Endothelial cell of umbilical vein (primary cell): ENCODE measurements at regions of chr12 and their contacts with region 1.

Region 1: GRCh38 chr12:89345830-89346740 is 6.2 kb downstream of the DUSP6 start:
- DNase-seq: peak; percentile 99
- H3K4me3 ChIP-seq: peak overlapping the region in 1 of 3 experiments; percentile 90
- H3K27ac ChIP-seq: peak overlapping the region; percentile 60
- H3K4me1 ChIP-seq: peaks cover 48% of the 10 kb centered on the region
- H3K27me3 ChIP-seq: no peaks in the 10 kb centered on the region
- CTCF ChIP-seq: no peak
- POLR2A ChIP-seq: no peak

Region 2: GRCh38 chr12:89051065-89051677 is 294.9 kb before region 1 on chr12:
- CTCF ChIA-PET with region 1: interaction called, 13 read pairs
- POLR2A ChIA-PET with region 1: no interaction called
- dilution Hi-C with region 1: no loop called
- intact Hi-C with region 1: loop called (anchors 1 kb)
- DNase-seq: peak; percentile 88
- H3K4me3 ChIP-seq: no peak overlapping the region
- H3K27ac ChIP-seq: no peak overlapping the region
- H3K4me1 ChIP-seq: no peaks in the 10 kb centered on the region
- H3K27me3 ChIP-seq: no peaks in the 10 kb centered on the region
- CTCF ChIP-seq: peak; percentile 62
- POLR2A ChIP-seq: no peak

Region 3: GRCh38 chr12:89084751-89085150 is 261.3 kb before region 1 on chr12:
- CTCF ChIA-PET with region 1: interaction called, 3 read pairs
- POLR2A ChIA-PET with region 1: no interaction called
- dilution Hi-C with region 1: no loop called
- intact Hi-C with region 1: loop called (anchors 1 kb)
- DNase-seq: peak; percentile 56
- H3K4me3 ChIP-seq: no peak overlapping the region
- H3K27ac ChIP-seq: peak overlapping the region; percentile 69
- H3K4me1 ChIP-seq: peaks cover 48% of the 10 kb centered on the region
- H3K27me3 ChIP-seq: no peaks in the 10 kb centered on the region
- CTCF ChIP-seq: no peak
- POLR2A ChIP-seq: no peak

Region 4: GRCh38 chr12:89134213-89134770 is 211.8 kb before region 1 on chr12:
- CTCF ChIA-PET with region 1: interaction called, 4 read pairs
- POLR2A ChIA-PET with region 1: interaction called, 6 read pairs
- dilution Hi-C with region 1: no loop called
- intact Hi-C with region 1: loop called (anchors 1 kb)
- DNase-seq: peak; percentile 92
- H3K4me3 ChIP-seq: no peak overlapping the region
- H3K27ac ChIP-seq: peak overlapping the region; percentile 8
- H3K4me1 ChIP-seq: peaks cover 17% of the 10 kb centered on the region
- H3K27me3 ChIP-seq: no peaks in the 10 kb centered on the region
- CTCF ChIP-seq: no peak
- POLR2A ChIP-seq: no peak

Region 5: GRCh38 chr12:89162704-89163261 is 183.3 kb before region 1 on chr12:
- CTCF ChIA-PET with region 1: no interaction called
- POLR2A ChIA-PET with region 1: interaction called, 9 read pairs
- dilution Hi-C with region 1: no loop called
- intact Hi-C with region 1: loop called (anchors 1 kb)
- DNase-seq: peak; percentile 96
- H3K4me3 ChIP-seq: no peak overlapping the region
- H3K27ac ChIP-seq: peak overlapping the region; percentile 97
- H3K4me1 ChIP-seq: peaks cover 61% of the 10 kb centered on the region
- H3K27me3 ChIP-seq: no peaks in the 10 kb centered on the region
- CTCF ChIP-seq: no peak
- POLR2A ChIP-seq: peak; percentile 25

Region 6: DNA sequence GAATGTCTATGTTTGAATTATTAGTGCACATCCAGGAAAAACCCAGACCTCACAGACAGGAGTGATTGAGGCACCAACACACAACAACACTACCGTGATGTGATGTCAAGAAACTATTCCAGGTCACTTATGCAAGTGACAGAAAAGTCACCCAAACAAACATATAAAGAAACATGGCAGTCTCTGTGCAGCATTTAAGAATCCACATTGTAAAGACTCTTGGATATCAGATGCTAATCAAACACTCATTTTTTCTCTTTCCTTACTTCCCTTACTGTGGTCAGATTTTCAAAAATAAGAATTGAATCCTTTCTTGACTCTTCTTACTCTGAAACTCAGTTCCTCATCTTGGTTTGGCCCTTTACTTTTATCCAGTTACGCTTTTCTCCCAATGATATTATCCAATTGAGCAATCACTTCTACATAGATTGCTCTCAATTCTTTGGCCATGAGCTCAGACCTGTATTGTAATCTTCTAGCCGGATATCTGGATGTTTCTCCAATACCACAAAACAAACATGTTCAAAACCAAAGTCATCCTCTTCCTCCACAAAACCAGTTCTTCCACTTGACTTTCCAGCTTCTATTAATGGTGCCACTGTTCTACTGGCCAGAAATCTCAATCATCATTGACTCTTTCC is 109.2 kb before region 1 on chr12:
- CTCF ChIA-PET with region 1: interaction called, 9 read pairs
- POLR2A ChIA-PET with region 1: interaction called, 3 read pairs
- dilution Hi-C with region 1: no loop called
- intact Hi-C with region 1: loop called (anchors 1 kb)
- DNase-seq: no peak
- H3K4me3 ChIP-seq: no peak overlapping the region
- H3K27ac ChIP-seq: peak overlapping the region; percentile 39
- H3K4me1 ChIP-seq: peaks cover 44% of the 10 kb centered on the region
- H3K27me3 ChIP-seq: no peaks in the 10 kb centered on the region
- CTCF ChIP-seq: no peak
- POLR2A ChIP-seq: no peak

Region 7: GRCh38 chr12:89451841-89452251 is 105.8 kb after region 1 on chr12:
- CTCF ChIA-PET with region 1: interaction called, 163 read pairs
- POLR2A ChIA-PET with region 1: interaction called, 34 read pairs
- dilution Hi-C with region 1: loop called (anchors 25 kb)
- intact Hi-C with region 1: no loop called
- DNase-seq: peak; percentile 74
- H3K4me3 ChIP-seq: no peak overlapping the region
- H3K27ac ChIP-seq: peak overlapping the region; percentile 65
- H3K4me1 ChIP-seq: peaks cover 53% of the 10 kb centered on the region
- H3K27me3 ChIP-seq: no peaks in the 10 kb centered on the region
- CTCF ChIP-seq: no peak
- POLR2A ChIP-seq: peak; percentile 15